Psoas muscle (tissue), 8 donors: ENCODE measurements at regions of chr4 and their contacts with region 1.

Region 1: DNA sequence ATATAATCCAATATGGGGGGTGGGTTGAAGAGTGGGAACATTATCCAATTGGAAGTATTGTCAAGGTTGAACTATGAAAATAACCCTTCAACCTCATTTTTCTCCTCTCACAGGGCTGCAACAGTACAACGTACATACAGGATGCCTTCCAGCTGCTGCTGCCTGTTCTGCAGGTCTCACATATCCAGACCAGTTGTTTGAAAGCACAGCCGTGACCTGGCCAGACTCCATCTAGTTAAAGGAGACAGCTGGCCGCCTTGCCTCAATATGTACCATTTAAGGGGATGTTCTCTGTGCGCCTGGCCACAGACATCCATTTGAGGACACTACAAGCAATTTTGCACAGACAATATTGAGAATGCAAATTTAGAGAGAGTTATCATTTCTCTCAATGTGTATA is 75.7 kb downstream of the FAM114A1 start:
- DNase-seq: peak; percentile 44 to 81
- ATAC-seq: peak; percentile 92 to 96 (median 94)
- H3K4me3 ChIP-seq: no peak overlapping the region
- H3K27ac ChIP-seq: peak overlapping the region; percentile 71
- H3K4me1 ChIP-seq: peaks cover 16% of the 10 kb centered on the region
- H3K27me3 ChIP-seq: no peaks in the 10 kb centered on the region
- CTCF ChIP-seq: no peak

Region 2: DNA sequence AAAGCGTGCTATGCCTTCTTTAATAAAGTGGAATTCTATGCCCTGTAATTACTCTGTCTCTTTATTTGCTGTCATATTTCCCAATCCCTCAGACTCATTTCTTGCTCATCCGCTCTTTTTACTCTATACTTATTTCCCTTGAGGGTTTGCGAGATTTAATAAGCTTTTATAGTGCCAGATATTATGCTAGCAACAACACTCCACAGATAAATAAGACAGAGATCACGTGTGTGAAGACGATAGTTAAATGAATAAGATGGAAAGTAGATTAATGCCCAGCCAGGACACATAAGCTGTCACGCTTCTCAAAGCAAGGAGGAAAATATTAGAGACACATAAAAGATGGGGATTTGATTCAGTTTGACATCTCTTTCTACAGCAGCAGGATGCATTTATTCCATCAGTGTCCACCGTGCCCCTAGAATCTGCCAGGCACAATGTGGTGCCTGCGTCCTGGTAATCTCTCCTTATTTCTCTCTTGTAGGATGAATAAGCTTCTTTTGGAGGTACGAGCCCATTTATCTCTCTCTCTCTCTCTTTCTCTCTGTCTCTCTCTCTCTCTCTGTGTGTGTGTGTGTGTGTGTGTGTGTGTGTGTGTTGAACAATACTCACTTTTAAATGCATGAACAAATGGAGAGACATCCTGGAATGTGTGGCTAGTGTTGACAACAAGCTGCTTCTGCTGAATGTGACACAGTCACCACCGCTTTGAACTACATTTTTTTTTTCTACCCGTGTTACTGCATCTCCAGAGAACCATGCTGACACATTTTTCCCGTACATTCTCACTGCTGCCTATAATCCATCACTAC is 40.6 kb after region 1 on chr4:
- intact Hi-C with region 1: no loop called
- DNase-seq: no peak
- ATAC-seq: no peak
- H3K4me3 ChIP-seq: no peak overlapping the region
- H3K27ac ChIP-seq: no peak overlapping the region
- H3K4me1 ChIP-seq: no peaks in the 10 kb centered on the region
- H3K27me3 ChIP-seq: peaks cover 0 to 2% (median 0%) of the 10 kb centered on the region in 3 donors
- CTCF ChIP-seq: no peak

Region 3: DNA sequence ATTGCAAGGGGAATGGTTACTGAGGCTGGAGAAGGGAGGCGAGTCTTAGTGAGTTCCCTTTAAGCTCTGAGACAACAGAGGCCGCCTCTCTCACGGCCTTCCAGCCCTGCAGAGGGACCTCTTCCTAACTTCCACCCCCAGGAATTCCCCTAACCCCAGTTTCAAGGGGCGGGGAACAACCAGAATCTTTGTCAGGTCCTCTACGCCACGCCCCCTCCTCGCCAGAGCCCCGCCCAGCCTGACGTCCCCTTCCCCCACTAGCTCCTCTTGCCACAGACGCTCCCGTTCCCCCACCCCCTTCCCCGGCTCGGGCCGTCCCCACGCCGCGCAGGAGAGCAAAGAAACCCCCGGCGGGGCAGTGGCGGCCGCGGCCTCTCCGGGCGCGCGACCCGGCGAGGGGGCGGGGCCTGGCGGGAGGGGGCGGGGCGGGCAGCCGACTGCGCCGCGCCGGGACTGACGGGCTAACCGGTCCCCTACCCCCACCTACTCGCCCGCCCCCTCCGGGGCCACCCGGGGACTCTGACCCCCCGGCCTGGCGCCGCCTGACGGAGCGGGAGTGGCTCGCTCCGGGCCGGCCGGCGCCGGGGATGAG is 101.1 kb after region 1 on chr4:
- intact Hi-C with region 1: loop called in 1 of 2 experiments (anchors 5 kb)
- DNase-seq: peak; percentile 90 to 95
- ATAC-seq: peak; percentile 90 to 94 (median 92)
- H3K4me3 ChIP-seq: peak overlapping the region; percentile 84
- H3K27ac ChIP-seq: peak overlapping the region; percentile 80
- H3K4me1 ChIP-seq: no peaks in the 10 kb centered on the region
- H3K27me3 ChIP-seq: no peaks in the 10 kb centered on the region
- CTCF ChIP-seq: no peak